Dorsolateral prefrontal cortex (tissue), 120 donors: ENCODE measurements at regions of chr7 and their contacts with region 1.

Region 1: DNA sequence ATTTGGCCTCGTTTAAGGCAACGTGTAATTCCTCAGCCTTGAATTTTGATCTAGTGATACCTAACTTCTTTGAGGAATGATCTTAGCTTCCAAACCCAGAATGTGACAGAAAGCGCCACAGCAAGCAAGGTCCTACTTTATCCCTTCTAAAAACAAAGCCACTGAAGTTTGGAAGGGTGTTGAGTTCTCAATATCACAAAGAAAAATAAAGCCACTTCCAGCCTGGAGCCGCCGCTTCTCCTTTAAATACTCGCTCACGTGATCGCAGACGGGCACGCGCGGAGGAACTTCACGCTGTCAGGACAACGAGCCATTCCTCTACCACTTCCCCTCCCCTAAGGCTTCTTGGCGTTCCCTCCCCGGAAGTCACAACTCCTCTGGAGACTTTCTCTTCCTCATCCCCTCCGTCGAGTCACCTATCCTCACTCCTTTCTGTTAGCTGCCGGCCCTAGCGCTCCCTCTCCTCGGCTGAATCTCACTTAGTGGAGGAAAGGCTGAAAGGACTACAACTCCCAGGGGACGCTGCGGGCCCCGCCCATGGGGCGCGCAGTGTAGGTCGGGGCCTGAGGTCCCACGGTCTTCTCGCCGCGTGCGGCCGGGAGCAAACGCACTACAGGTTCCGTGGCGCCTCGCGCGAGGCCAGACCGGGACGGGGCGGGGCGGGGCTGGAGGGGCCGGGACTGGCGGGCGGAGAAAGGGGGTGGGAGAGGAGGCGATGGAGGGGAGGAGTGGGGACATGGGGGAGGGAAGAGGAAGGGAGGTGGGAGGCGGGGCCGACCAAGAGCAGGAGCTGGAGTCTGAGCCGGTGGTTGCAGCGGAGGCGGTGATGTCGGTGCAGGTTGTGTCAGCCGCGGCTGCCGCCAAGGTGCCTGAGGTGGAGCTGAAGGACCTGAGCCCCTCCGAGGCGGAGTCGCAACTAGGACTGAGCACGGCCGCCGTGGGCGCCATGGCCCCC is at the start of gene AHCYL2:
- DNase-seq: peak; percentile 95 to 99 (median 98)
- H3K4me3 ChIP-seq: peak within 1 kb of the TSS; percentile 73 to 96 (median 87)
- H3K27ac ChIP-seq: peak within 1 kb of the TSS; percentile 73 to 99 (median 95)
- H3K27me3 ChIP-seq: no peaks in the 10 kb centered on the region
- CTCF ChIP-seq: peak in 16 of 56 donors; percentile 4 to 46 (median 18)
- total RNA-seq, gene AHCYL2: 57.4 to 199 (median 90.1) TPM

Region 2: GRCh38 chr7:129271500-129272355 is 47.2 kb after region 1 on chr7:
- intact Hi-C with region 1: loop called (anchors 2 kb)
- DNase-seq: peak in 2 of 10 donors; percentile 10 to 17
- H3K4me3 ChIP-seq: peak overlapping the region in 19 of 59 donors; percentile 10 to 49 (median 32)
- H3K27ac ChIP-seq: peak overlapping the region in 4 of 59 donors; percentile 10 to 60 (median 24)
- H3K27me3 ChIP-seq: no peaks in the 10 kb centered on the region
- CTCF ChIP-seq: peak in 55 of 56 donors; percentile 38 to 84 (median 63)

Region 3: DNA sequence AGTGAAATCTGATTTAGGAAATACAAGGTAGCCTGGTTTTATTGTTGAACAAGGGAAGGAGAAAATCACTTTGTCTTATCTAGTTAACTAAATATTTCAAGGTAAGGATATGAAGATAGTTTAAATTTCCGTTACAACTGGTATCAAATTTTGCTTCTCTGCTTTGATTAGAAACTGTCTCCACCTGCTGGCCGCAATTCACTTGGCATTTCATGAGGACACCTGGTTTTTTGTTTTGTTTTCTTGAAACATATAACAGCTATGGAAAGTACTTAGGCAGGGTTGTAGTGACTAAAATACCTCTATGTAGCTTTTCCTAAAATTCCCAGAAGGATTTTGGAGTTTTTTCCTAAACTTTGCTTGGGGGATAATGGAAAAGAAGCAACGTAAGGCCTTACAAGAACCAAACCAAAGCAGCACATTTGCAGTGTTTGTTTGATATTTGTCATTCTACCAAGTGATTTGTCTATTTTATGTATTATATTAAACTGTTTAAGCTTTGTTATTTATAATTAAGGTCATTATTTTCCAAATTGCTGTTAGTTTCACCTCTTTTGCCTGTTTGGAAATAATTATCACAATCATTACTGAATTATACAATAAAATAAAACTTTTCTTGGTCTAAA is 73.9 kb after region 1 on chr7:
- intact Hi-C with region 1: loop called (anchors 5 kb)
- DNase-seq: peak in 5 of 10 donors; percentile 17 to 57 (median 45)
- H3K4me3 ChIP-seq: no peak overlapping the region
- H3K27ac ChIP-seq: no peak overlapping the region
- H3K27me3 ChIP-seq: no peaks in the 10 kb centered on the region
- CTCF ChIP-seq: peak; percentile 45 to 79 (median 66)

Region 4: DNA sequence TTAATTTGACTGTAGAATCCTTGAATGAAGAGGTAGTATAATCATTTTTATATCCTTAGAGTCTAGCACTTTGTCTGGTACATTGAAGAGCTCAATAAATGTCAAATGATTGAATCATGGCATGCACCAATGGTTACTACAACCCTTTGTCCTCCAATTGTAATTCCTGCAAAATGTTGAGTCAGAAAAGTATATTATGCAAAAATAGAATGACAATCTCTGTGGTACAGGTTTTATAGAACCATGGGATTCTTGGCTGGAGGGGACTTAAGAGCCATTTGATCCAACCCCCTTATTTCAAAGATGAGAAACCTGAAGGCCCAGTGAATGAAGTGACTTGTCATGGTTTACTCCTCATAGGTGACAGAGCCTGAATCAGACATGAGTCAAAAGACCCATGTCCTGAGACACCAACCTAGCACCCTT is 246.9 kb after region 1 on chr7:
- intact Hi-C with region 1: loop called in 1 of 2 experiments (anchors 5 kb)
- DNase-seq: no peak
- H3K4me3 ChIP-seq: no peak overlapping the region
- H3K27ac ChIP-seq: peak overlapping the region in 1 of 59 donors; percentile 10
- H3K27me3 ChIP-seq: no peaks in the 10 kb centered on the region
- CTCF ChIP-seq: no peak

Region 5: DNA sequence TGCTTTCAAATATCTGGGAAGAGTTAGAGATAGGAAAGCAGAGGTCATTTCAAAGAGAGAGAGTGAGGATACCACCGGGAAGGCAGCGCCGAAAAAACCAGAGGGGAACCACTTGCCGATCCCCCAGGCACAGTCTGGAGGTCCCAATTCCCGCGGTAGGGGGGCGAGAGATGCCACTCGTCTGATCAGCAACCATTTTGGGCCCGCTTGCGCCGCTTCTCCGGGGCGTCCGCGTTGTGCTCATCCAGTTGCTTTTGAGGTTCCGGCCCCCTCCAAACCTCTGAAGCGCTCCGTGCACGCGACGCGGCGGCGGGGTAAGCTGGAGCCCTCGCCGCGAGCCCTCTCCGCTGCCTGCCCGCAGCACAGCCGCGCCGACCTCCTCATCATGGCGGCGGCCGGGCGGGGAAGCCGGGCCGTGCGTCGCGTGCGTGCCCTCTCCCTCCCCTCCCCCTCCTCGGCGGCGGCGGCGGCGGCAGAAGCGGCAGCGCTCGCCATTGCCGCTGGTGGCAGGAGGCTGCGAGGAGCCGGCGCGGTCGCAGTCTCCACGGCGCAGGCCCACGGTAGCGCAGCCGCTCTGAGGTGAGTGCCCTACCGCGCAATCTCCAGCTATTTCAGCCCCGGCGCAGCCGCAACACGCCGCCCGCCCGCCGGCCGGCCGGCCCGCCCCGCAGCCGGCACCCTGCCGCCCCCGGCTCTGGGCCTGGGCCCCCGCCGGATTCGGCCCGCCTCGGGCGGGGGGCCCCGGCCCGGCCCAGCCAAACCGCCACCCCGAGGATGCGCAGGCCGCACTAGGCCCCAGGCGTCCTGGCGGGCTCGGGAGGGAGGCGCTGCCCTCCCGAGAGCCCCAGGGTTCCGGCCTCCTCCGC is 387.0 kb after region 1 on chr7 and contains the start of gene NRF1:
- intact Hi-C with region 1: loop called (anchors 5 to 10 kb)
- DNase-seq: peak; percentile 66 to 91 (median 80)
- H3K4me3 ChIP-seq: peak within 1 kb of the TSS; percentile 60 to 97 (median 89)
- H3K27ac ChIP-seq: peak within 1 kb of the TSS; percentile 89 to 100 (median 98)
- H3K27me3 ChIP-seq: no peaks in the 10 kb centered on the region
- CTCF ChIP-seq: peak in 33 of 56 donors; percentile 10 to 55 (median 26)
- total RNA-seq, gene NRF1: 20.9 to 56.9 (median 34.7) TPM

Region 6: GRCh38 chr7:129952653-129953560 is 728.4 kb after region 1 on chr7 and contains the start of gene UBE2H:
- intact Hi-C with region 1: loop called in 1 of 2 experiments (anchors 5 kb)
- DNase-seq: peak; percentile 89 to 96 (median 94)
- H3K4me3 ChIP-seq: peak within 1 kb of the TSS; percentile 65 to 99 (median 91)
- H3K27ac ChIP-seq: peak within 1 kb of the TSS; percentile 66 to 98 (median 94)
- H3K27me3 ChIP-seq: no peaks in the 10 kb centered on the region
- CTCF ChIP-seq: peak in 2 of 56 donors; percentile 12 to 21
- total RNA-seq, gene UBE2H: 66.1 to 118 (median 87.6) TPM